Mammary epithelial cell (primary cell): ENCODE measurements at regions of chr1 and their contacts with region 1.

Region 1: DNA sequence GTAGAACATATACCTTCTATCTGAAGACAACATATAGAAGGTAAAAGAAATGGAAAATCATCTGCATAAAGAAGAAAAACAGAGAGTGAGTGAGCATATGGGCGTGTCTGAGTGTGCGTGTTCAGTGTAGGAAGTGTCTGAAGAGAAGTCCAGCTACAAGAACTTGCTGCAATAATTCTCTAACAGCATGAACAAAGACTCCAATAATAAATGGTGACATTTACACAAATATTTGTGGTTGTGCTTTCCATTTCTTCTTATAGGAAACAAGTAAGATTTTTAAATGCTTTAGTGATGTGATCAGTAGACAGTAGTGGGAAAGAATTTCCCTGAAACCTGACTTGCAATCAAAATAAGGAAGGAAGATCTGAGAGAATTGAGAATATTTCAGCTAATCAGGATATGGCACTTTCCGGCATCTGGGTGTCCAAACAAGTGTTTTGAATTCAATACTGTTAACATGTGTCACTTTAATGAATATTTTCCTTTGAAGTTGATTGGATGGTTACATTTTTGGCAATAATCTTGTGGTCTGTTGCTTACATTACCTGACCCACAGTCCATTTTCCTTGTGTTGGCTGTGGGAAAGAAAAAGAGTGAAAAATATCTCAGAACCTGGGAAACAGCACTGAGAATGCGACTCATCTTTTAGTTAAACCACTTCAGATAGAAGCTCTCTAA is 154.0 kb downstream of the TGFB2 start:
- DNase-seq: peak; percentile 80
- H3K4me3 ChIP-seq: peak overlapping the region in 2 of 3 experiments; percentile 23 to 29
- H3K27ac ChIP-seq: peak overlapping the region; percentile 94
- H3K4me1 ChIP-seq: peaks cover 35% of the 10 kb centered on the region
- H3K27me3 ChIP-seq: no peaks in the 10 kb centered on the region
- CTCF ChIP-seq: no peak

Region 2: GRCh38 chr1:218377143-218377660 is 121.9 kb before region 1 on chr1:
- CTCF ChIA-PET with region 1: no interaction called
- dilution Hi-C with region 1: no loop called
- in situ Hi-C with region 1: no loop called
- intact Hi-C with region 1: loop called (anchors 5 kb)
- DNase-seq: peak; percentile 95
- H3K4me3 ChIP-seq: no peak overlapping the region
- H3K27ac ChIP-seq: peak overlapping the region; percentile 46
- H3K4me1 ChIP-seq: peaks cover 73% of the 10 kb centered on the region
- H3K27me3 ChIP-seq: no peaks in the 10 kb centered on the region
- CTCF ChIP-seq: no peak

Region 3: DNA sequence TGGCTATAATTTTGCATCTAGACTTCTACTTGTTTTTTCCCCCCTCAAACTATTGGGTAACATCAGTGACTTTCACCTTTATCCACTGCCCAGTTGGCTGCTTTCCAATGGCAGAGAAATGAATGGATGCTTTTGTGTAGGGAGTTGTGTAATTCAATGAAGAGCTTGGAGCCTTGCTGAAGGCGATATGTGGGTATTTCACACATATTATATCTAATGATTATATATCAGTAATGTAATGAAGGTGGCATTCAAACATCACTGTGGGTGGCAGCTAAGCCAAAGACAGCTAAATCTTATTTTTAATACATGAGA is 72.9 kb before region 1 on chr1:
- CTCF ChIA-PET with region 1: no interaction called
- dilution Hi-C with region 1: no loop called
- in situ Hi-C with region 1: no loop called
- intact Hi-C with region 1: loop called (anchors 5 kb)
- DNase-seq: peak; percentile 86
- H3K4me3 ChIP-seq: no peak overlapping the region
- H3K27ac ChIP-seq: peak overlapping the region; percentile 57
- H3K4me1 ChIP-seq: peaks cover 31% of the 10 kb centered on the region
- H3K27me3 ChIP-seq: no peaks in the 10 kb centered on the region
- CTCF ChIP-seq: no peak

Region 4: GRCh38 chr1:218480137-218480536 is 19.0 kb before region 1 on chr1:
- CTCF ChIA-PET with region 1: no interaction called
- dilution Hi-C with region 1: no loop called
- in situ Hi-C with region 1: no loop called
- intact Hi-C with region 1: loop called (anchors 1 kb)
- DNase-seq: peak; percentile 92
- H3K4me3 ChIP-seq: no peak overlapping the region
- H3K27ac ChIP-seq: peak overlapping the region; percentile 93
- H3K4me1 ChIP-seq: peaks cover 54% of the 10 kb centered on the region
- H3K27me3 ChIP-seq: no peaks in the 10 kb centered on the region
- CTCF ChIP-seq: no peak

Region 5: GRCh38 chr1:218537122-218537904 is 38.2 kb after region 1 on chr1:
- CTCF ChIA-PET with region 1: no interaction called
- dilution Hi-C with region 1: no loop called
- in situ Hi-C with region 1: no loop called
- intact Hi-C with region 1: loop called (anchors 2 kb)
- DNase-seq: peak; percentile 62
- H3K4me3 ChIP-seq: no peak overlapping the region
- H3K27ac ChIP-seq: peak overlapping the region; percentile 62
- H3K4me1 ChIP-seq: peaks cover 18% of the 10 kb centered on the region
- H3K27me3 ChIP-seq: no peaks in the 10 kb centered on the region
- CTCF ChIP-seq: no peak

Region 6: GRCh38 chr1:218557731-218558130 is 58.6 kb after region 1 on chr1:
- CTCF ChIA-PET with region 1: no interaction called
- dilution Hi-C with region 1: no loop called
- in situ Hi-C with region 1: no loop called
- intact Hi-C with region 1: no loop called
- DNase-seq: peak; percentile 61
- H3K4me3 ChIP-seq: no peak overlapping the region
- H3K27ac ChIP-seq: no peak overlapping the region
- H3K4me1 ChIP-seq: peaks cover 9% of the 10 kb centered on the region
- H3K27me3 ChIP-seq: no peaks in the 10 kb centered on the region
- CTCF ChIP-seq: no peak

Region 7: DNA sequence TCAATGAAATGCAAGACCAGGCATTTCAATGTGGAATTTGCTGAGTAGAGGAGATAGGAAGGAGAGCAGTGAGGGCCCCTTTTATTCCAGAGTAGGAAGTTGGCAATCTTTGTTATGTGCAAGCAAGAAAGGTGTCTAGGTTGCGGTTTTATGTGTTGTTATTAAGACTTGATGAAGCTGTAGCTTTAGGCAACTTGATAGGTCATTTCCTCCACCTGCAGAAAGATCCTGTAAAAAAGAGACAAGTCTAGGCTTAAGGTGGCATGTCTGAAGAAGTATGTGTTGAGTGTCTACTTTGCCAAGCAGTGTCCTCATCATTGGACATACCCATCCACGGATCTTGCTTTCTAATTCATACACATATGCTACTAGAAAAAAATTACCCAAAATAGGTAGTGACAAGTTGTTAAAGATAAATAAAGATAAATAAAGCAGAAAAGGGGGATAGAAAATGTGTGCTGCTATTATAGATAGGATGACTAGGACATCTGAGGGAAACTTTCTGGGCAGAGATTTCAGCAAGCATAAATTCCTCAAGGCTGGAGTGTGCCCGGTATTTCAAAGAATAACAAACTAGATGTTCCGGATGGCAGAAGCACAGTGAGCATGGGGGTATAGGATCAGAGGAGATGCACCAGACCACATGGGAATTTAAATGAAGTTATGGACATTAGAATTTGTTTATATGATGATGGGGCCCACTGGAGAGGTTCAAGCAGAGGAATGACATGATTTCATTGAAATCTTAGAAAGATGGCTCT is 181.0 kb after region 1 on chr1:
- CTCF ChIA-PET with region 1: no interaction called
- dilution Hi-C with region 1: no loop called
- in situ Hi-C with region 1: no loop called
- intact Hi-C with region 1: loop called (anchors 5 kb)
- DNase-seq: peak; percentile 63
- H3K4me3 ChIP-seq: no peak overlapping the region
- H3K27ac ChIP-seq: peak overlapping the region; percentile 76
- H3K4me1 ChIP-seq: peaks cover 47% of the 10 kb centered on the region
- H3K27me3 ChIP-seq: no peaks in the 10 kb centered on the region
- CTCF ChIP-seq: no peak

Region 8: DNA sequence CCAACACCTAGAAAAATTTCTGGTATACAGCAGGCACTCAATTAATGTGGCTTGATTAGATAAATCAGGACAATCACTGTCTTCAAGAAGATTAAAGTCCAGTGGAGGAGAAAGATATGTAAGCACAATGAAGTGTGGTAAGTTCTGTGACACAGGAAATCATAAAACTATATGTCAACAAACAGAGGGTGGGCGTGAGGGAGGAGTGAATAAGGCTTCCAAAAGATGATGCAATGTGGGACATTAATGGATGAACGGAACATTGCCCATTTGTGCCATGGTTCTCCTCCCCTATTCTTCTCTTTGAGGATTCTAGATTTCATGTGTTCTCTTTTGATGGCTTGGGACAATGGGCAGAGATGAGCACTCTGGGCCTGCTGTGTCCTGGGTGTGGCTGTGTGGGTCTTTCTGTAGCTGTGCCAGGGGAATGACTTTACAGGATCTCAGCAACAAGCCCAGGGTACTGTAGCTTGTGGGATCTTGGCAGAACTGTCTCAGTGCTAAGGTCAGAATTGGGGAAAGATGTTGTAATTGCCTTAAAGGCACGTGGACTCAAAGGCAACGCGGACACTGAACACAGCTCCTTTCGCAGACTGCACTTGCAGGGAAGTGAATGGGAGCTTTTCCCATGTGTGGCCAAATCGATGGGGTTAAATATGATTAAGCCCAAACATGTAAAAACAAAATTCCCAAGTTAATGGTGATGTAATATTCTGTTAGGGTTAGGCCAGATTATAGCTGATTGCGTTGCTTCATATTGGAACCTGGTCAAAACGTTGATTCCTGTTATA is 212.9 kb after region 1 on chr1:
- CTCF ChIA-PET with region 1: no interaction called
- dilution Hi-C with region 1: no loop called
- in situ Hi-C with region 1: no loop called
- intact Hi-C with region 1: loop called (anchors 2 kb)
- DNase-seq: peak; percentile 81
- H3K4me3 ChIP-seq: no peak overlapping the region
- H3K27ac ChIP-seq: peak overlapping the region; percentile 87
- H3K4me1 ChIP-seq: peaks cover 34% of the 10 kb centered on the region
- H3K27me3 ChIP-seq: no peaks in the 10 kb centered on the region
- CTCF ChIP-seq: no peak

Region 9: DNA sequence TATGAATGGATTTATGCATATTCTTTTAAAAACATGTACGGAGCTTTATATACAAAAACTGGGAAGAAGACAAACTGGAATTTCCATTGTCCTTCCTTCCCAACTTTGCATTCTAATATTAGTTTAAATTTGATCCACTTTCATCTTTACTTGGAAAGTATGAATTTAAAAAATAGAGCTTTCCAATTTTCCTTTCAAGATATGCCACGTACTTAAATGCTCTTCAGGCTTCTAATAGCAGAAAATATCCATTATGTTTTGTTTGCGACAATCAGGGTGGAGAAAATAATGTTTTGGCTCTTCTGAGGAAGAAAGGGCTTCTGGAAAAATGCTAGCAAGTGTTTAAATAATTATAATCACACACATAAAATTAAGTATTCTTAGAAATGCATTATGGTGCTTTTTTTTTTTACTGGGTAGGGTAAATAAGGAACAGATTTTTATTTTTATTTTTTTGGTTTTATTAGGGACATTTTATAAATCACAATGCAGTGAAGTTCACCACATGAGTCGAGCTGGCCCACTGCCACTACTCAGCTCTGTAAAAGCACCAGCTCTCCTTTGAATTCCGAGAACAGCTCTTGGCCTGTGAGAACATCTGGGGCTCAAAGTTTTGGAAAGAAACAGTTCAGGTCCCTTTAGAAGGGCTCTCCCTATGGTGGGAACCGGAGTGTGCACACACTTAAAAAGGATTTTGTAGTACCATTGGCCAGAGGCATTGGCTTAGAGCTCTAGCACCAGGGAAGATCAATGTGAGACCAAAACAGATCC is 387.1 kb after region 1 on chr1:
- CTCF ChIA-PET with region 1: no interaction called
- dilution Hi-C with region 1: no loop called
- in situ Hi-C with region 1: no loop called
- intact Hi-C with region 1: no loop called
- DNase-seq: peak; percentile 37
- H3K4me3 ChIP-seq: no peak overlapping the region
- H3K27ac ChIP-seq: peak overlapping the region; percentile 67
- H3K4me1 ChIP-seq: peaks cover 31% of the 10 kb centered on the region
- H3K27me3 ChIP-seq: no peaks in the 10 kb centered on the region
- CTCF ChIP-seq: no peak